Panc1 (cell line): ENCODE measurements at regions of chr1 and their contacts with region 1.

Region 1: DNA sequence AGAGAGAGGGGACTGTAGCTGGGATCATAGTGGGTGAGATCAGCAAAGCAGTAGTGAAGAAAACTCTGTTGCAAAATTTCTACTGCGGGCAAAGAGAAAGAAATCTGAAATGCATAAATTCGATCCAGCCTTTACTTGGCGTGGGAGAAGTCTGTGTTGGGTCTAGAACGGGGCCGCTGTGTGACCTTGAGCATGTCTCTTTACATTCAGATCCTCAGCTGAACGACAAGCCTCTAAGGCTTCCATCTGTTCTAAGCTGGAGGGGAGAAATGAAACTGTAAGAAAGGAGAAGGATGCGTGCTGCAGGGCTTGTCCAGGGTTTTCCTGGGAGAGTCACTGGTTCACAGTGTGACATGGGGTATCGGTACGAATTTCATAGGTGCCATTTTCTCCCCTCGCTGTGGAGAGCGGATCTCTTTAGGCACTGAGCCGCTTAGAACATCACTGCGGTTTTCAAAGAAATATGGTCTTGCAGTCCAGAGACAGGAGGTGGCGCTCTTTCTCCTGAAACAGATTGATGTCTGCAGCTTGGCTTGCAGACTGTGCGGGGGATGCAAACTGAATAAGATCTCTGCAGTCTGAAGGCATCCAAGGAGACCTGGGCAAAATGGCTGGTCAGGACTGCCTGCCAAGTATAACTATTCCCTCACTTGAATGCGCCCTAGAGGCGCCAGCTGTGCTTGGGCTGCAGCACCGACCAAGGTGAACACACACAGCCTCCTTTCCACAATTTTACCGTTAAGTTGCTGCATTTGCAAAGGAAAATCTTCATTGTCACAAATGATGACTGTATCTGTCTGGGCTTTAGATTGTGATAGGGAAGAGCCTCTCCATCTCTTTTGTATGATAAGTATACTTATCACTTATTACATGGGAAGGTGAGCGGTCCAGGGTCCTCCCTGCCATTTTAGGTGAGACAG is 104.1 kb downstream of the XCL2 start:
- DNase-seq: peak; percentile 36
- ATAC-seq: peak; percentile 91
- H3K4me3 ChIP-seq: peak overlapping the region in 1 of 2 experiments; percentile 31; a peak in 2 of 4 replicates
- H3K27ac ChIP-seq: no peak overlapping the region
- H3K4me1 ChIP-seq: no peaks in the 10 kb centered on the region
- H3K27me3 ChIP-seq: no peaks in the 10 kb centered on the region; the same call in 1 of the 2 replicates
- CTCF ChIP-seq: peak; percentile 84

Region 2: GRCh38 chr1:168572633-168573032 is 132.9 kb after region 1 on chr1:
- CTCF ChIA-PET with region 1: interaction called, 5 read pairs
- POLR2A ChIA-PET with region 1: no interaction called
- in situ Hi-C with region 1: no loop called
- intact Hi-C with region 1: loop called (anchors 5 kb)
- DNase-seq: no peak
- ATAC-seq: no peak
- H3K4me3 ChIP-seq: no peak overlapping the region
- H3K27ac ChIP-seq: no peak overlapping the region
- H3K4me1 ChIP-seq: no peaks in the 10 kb centered on the region
- H3K27me3 ChIP-seq: peaks cover 5% of the 10 kb centered on the region
- CTCF ChIP-seq: no peak